K562 (cell line): ENCODE measurements at regions of chr3 and their contacts with region 1.

Region 1: GRCh38 chr3:136752422-136753325 is 496 bp upstream of the STAG1 start:
- DNase-seq: peak; percentile 86 to 96 (median 90)
- ATAC-seq: peak; percentile 88
- H3K4me3 ChIP-seq: peak overlapping the region; percentile 57
- H3K27ac ChIP-seq: peak overlapping the region; percentile 98
- H3K4me1 ChIP-seq: peaks cover 0 to 11% of the 10 kb centered on the region in 2 experiments; a peak in 3 of 5 replicates
- H3K27me3 ChIP-seq: no peaks in the 10 kb centered on the region
- CTCF ChIP-seq: peak in 2 of 3 experiments; percentile 25 to 41; a peak in 3 of 6 replicates
- EP300 ChIP-seq: 0 out of 2 replicates have a peak, but pooled peaks have one; percentile 20
- POLR2A ChIP-seq: peak; percentile 86
- RAD21 ChIP-seq: peak; percentile 31 to 62; a peak in 3 of 4 replicates

Region 2: GRCh38 chr3:136390574-136390973 is 362.1 kb before region 1 on chr3:
- CTCF ChIA-PET with region 1: interaction called, 6 read pairs
- POLR2A ChIA-PET with region 1: interaction called, 11 read pairs
- in situ Hi-C with region 1: no loop called
- intact Hi-C with region 1: loop called (anchors 2 kb)
- DNase-seq: no peak
- ATAC-seq: no peak
- H3K4me3 ChIP-seq: no peak overlapping the region
- H3K27ac ChIP-seq: no peak overlapping the region
- H3K4me1 ChIP-seq: no peaks in the 10 kb centered on the region
- H3K27me3 ChIP-seq: no peaks in the 10 kb centered on the region
- CTCF ChIP-seq: no peak
- EP300 ChIP-seq: no peak
- POLR2A ChIP-seq: no peak
- RAD21 ChIP-seq: no peak

Region 3: DNA sequence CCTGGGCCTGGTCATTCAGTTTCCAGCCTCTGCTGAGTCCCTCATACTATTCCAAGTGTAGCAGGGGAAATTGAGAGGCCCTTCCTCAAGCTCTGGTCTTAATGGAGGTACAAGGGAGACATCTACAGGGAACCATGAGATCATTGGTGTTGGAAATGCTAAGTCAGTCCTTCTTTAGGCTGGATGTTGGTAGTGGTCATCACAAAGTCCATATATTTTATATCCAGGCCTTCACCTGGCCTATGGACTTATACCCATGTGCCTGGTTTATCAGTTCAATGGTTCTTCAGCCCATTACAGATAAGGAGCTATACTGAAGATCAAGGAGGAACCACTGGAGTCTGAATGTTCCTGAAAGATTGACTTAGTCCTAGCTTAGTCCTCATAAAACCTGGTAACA is 135.5 kb before region 1 on chr3:
- CTCF ChIA-PET with region 1: no interaction called
- POLR2A ChIA-PET with region 1: no interaction called
- in situ Hi-C with region 1: no loop called
- intact Hi-C with region 1: loop called (anchors 5 kb)
- DNase-seq: peak in 2 of 4 experiments; percentile 35 to 50
- ATAC-seq: peak; percentile 92
- H3K4me3 ChIP-seq: no peak overlapping the region
- H3K27ac ChIP-seq: peak overlapping the region; percentile 63
- H3K4me1 ChIP-seq: peaks cover 3 to 12% of the 10 kb centered on the region in 2 experiments; a peak in 3 of 5 replicates
- H3K27me3 ChIP-seq: no peaks in the 10 kb centered on the region
- CTCF ChIP-seq: peak in 2 of 3 experiments; percentile 23 to 40; a peak in 2 of 6 replicates
- EP300 ChIP-seq: no peak
- POLR2A ChIP-seq: no peak
- RAD21 ChIP-seq: peak; percentile 14 to 68; a peak in 2 of 4 replicates

Region 4: DNA sequence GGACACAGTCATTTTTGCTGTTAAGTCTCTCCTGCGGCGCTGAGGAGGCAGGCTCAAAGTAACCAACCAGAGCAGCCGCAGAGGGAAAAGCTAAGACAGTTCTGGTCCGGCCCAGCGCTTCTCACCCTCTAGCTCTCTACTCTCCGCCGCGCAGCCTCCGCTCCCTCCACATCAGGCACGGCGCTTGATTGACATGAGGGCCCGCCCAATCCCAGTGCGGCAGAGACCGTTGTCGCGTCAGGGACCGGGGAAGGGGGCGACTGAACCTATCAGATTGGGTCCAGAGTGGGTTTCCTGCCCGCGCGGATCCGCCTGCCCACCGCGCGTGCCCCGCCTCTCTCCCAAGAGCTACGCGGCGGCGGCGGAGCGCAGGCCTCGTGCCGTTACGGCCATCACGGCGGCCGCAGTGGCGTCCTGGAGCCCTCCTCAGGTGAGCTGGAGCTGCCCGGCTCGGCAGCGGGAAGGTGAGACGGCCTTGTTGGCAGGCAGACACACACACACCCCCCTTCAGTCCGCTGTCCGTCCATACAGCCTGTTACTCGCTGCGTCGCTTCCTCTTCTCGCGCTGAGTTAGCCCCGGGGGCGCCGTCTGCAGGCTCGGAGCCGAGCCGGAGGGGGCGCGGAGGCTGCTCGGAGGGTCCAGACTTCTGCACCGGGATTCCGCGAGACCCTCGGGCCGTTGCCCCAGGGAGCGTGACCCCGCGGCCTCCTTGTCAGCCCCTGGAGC is 109.4 kb after region 1 on chr3 and contains the start of gene NCK1:
- CTCF ChIA-PET with region 1: no interaction called
- POLR2A ChIA-PET with region 1: interaction called, 4 read pairs
- in situ Hi-C with region 1: no loop called
- intact Hi-C with region 1: loop called (anchors 2 kb)
- DNase-seq: peak; percentile 93 to 96 (median 94)
- ATAC-seq: peak; percentile 96
- H3K4me3 ChIP-seq: peak within 1 kb of the TSS; percentile 97
- H3K27ac ChIP-seq: peak within 1 kb of the TSS; percentile 94
- H3K4me1 ChIP-seq: peaks cover 8 to 16% of the 10 kb centered on the region in 2 experiments; a peak in 4 of 5 replicates
- H3K27me3 ChIP-seq: no peaks in the 10 kb centered on the region
- CTCF ChIP-seq: no peak; a peak in 1 of 6 replicates
- EP300 ChIP-seq: no peak
- POLR2A ChIP-seq: peak; percentile 88
- RAD21 ChIP-seq: no peak
- polyA plus RNA-seq, gene NCK1: 17.3 to 24.4 TPM

Region 5: GRCh38 chr3:137013955-137014688 is 261.4 kb after region 1 on chr3:
- CTCF ChIA-PET with region 1: interaction called, 18 read pairs
- POLR2A ChIA-PET with region 1: interaction called, 42 read pairs
- in situ Hi-C with region 1: loop called (anchors 5 kb)
- intact Hi-C with region 1: loop called (anchors 1 kb)
- DNase-seq: peak; percentile 77 to 88 (median 80)
- ATAC-seq: peak; percentile 93
- H3K4me3 ChIP-seq: peak overlapping the region; percentile 36
- H3K27ac ChIP-seq: peak overlapping the region; percentile 82
- H3K4me1 ChIP-seq: peaks cover 4 to 7% of the 10 kb centered on the region in 2 experiments; a peak in 3 of 5 replicates
- H3K27me3 ChIP-seq: no peaks in the 10 kb centered on the region
- CTCF ChIP-seq: peak; percentile 79 to 87 (median 81)
- EP300 ChIP-seq: no peak
- POLR2A ChIP-seq: peak; percentile 46; the same call in 1 of the 2 replicates
- RAD21 ChIP-seq: peak; percentile 83 to 88